Heart right ventricle (tissue), 16 donors: ENCODE measurements at regions of chr1 and their contacts with region 1.

Region 1: GRCh38 chr1:86507935-86508582 is 38.8 kb upstream of the CLCA4 start:
- DNase-seq: no peak
- ATAC-seq: no peak
- H3K4me3 ChIP-seq: no peak overlapping the region
- H3K27ac ChIP-seq: no peak overlapping the region
- H3K4me1 ChIP-seq: peaks cover 0 to 22% (median 13%) of the 10 kb centered on the region in 9 donors
- H3K27me3 ChIP-seq: no peaks in the 10 kb centered on the region
- CTCF ChIP-seq: peak; percentile 17 to 70 (median 58)

Region 2: GRCh38 chr1:86380257-86380861 is 127.7 kb before region 1 on chr1:
- intact Hi-C with region 1: loop called in 9 of 10 experiments (anchors 2 to 10 kb)
- DNase-seq: no peak
- ATAC-seq: peak in 5 of 8 donors; percentile 58 to 77 (median 65)
- H3K4me3 ChIP-seq: peak overlapping the region in 4 of 10 donors; percentile 10 to 43 (median 22)
- H3K27ac ChIP-seq: peak overlapping the region in 1 of 10 donors; percentile 31
- H3K4me1 ChIP-seq: peaks cover 0 to 23% (median 0%) of the 10 kb centered on the region in 9 donors
- H3K27me3 ChIP-seq: no peaks in the 10 kb centered on the region
- CTCF ChIP-seq: peak; percentile 39 to 94 (median 82)